WTC11 (cell line): ENCODE measurements at regions of chr16 and their contacts with region 1.

Region 1: DNA sequence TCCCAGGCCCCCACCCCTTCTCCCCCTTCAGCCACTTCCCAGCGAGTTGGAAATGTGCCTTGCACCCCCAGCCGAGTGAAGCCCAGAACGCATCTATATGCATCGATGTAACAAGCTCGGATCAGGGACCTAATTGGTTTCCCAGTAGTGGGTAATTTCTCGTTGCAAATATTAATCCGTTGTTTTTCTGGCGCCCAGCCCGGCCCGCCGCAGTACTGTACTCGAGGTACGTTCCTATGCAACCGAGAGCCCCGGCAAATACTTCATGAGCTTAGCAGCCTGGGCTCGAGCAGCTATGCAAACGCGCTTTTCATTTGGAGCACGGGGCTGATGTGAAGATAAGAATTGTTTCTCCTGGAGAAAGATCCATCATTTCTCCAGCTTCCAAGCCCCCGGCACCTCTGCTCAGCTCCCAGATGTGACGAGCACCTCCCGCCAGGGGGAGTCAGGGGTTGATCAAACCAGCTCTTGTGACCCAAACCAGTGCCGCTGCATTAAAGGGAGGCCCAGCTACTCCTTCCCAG is 229.8 kb downstream of the KATNIP start:
- DNase-seq: peak; percentile 82
- ATAC-seq: peak; percentile 90
- H3K4me3 Mint-ChIP-seq: no peak overlapping the region
- H3K27ac Mint-ChIP-seq: no peak overlapping the region
- H3K4me1 Mint-ChIP-seq: 0 out of 2 replicates have a peak, but pooled peaks cover 2% of the 10 kb centered on the region
- H3K27me3 Mint-ChIP-seq: no peaks in the 10 kb centered on the region
- CTCF ChIP-seq: peak; percentile 31; the same call in 1 of the 2 replicates

Region 2: GRCh38 chr16:27628241-27628942 is 151.3 kb before region 1 on chr16:
- CTCF ChIA-PET with region 1: no interaction called
- POLR2A ChIA-PET with region 1: no interaction called
- DNase-seq: peak; percentile 20
- ATAC-seq: peak; percentile 57
- H3K4me3 Mint-ChIP-seq: no peak overlapping the region
- H3K27ac Mint-ChIP-seq: no peak overlapping the region
- H3K4me1 Mint-ChIP-seq: no peaks in the 10 kb centered on the region
- H3K27me3 Mint-ChIP-seq: peaks cover 11% of the 10 kb centered on the region
- CTCF ChIP-seq: no peak

Region 3: DNA sequence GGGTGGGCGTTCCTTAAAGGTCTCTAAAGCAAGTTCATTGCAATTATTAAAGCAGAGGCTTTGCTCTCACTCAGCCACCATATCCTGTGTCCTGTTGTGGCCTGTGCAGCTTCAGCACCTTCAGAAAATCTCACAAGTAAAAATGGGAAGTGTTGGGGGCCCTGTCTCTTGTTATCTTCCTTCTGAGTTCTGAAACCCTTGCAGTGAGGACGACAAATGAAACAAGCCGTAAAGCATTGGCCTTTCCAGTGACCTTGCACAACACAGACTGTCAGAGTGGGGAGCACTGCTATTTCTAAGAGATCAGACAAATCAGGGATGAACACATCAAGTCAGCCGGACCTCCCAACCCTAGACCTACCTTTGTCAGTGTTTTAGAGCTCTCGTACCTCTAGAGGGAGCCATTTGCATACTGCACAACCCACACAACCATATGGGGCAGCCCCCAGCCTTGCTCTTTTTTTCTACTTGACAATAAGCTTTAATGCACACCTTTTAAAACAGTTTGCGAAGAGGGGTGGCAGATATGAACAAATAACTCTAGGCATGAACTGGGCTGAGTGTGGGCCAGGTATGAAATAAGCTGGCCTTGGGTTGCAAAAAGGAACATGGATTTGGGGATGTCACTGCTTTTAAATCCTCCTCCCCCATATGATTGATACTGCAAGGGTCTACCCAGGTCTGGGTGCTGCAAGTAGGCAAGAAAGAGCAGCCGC is 140.0 kb before region 1 on chr16:
- CTCF ChIA-PET with region 1: interaction called, 13 read pairs
- POLR2A ChIA-PET with region 1: no interaction called
- DNase-seq: peak; percentile 40
- ATAC-seq: peak; percentile 87
- H3K4me3 Mint-ChIP-seq: no peak overlapping the region
- H3K27ac Mint-ChIP-seq: no peak overlapping the region
- H3K4me1 Mint-ChIP-seq: peaks cover 25% of the 10 kb centered on the region
- H3K27me3 Mint-ChIP-seq: no peaks in the 10 kb centered on the region
- CTCF ChIP-seq: peak; percentile 46

Region 4: GRCh38 chr16:27792486-27793248 is 13.0 kb after region 1 on chr16:
- CTCF ChIA-PET with region 1: interaction called, 12 read pairs
- POLR2A ChIA-PET with region 1: no interaction called
- DNase-seq: no peak
- ATAC-seq: no peak
- H3K4me3 Mint-ChIP-seq: no peak overlapping the region
- H3K27ac Mint-ChIP-seq: no peak overlapping the region
- H3K4me1 Mint-ChIP-seq: no peaks in the 10 kb centered on the region
- H3K27me3 Mint-ChIP-seq: no peaks in the 10 kb centered on the region
- CTCF ChIP-seq: no peak

Region 5: GRCh38 chr16:27847030-27847550 is 67.4 kb after region 1 on chr16:
- CTCF ChIA-PET with region 1: interaction called, 15 read pairs
- POLR2A ChIA-PET with region 1: no interaction called
- DNase-seq: no peak
- ATAC-seq: no peak
- H3K4me3 Mint-ChIP-seq: no peak overlapping the region
- H3K27ac Mint-ChIP-seq: 0 out of 2 replicates have a peak overlapping the region, but pooled peaks have one; percentile 67
- H3K4me1 Mint-ChIP-seq: peaks cover 36% of the 10 kb centered on the region
- H3K27me3 Mint-ChIP-seq: no peaks in the 10 kb centered on the region
- CTCF ChIP-seq: no peak

Region 6: DNA sequence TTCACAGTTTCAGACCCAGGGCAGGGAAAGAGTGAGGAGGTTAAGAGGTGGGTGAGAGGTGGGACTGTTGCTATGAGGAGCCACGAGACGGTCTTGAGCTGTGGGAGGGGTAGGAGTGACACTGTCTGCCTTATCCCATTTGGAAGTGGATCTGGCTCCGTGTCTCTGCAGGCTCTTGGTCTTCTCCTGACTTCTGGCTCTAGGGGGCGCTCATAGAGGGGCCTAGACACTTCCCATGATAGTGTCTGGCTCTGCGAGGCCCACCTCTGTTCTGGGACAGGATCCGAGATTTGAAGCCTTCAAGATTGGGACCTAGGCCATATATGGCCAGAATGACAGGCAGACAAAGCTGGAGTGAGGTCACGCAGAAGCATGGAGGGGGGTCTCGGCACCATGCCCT is 79.3 kb after region 1 on chr16:
- CTCF ChIA-PET with region 1: interaction called, 39 read pairs
- POLR2A ChIA-PET with region 1: no interaction called
- DNase-seq: peak; percentile 66
- ATAC-seq: peak; percentile 92
- H3K4me3 Mint-ChIP-seq: no peak overlapping the region
- H3K27ac Mint-ChIP-seq: no peak overlapping the region
- H3K4me1 Mint-ChIP-seq: no peaks in the 10 kb centered on the region
- H3K27me3 Mint-ChIP-seq: no peaks in the 10 kb centered on the region; the same call in none of the 2 replicates
- CTCF ChIP-seq: peak; percentile 40; the same call in 1 of the 2 replicates